ENCODE measurements at regions of chr19 and their contacts with region 1.

Region 1: DNA sequence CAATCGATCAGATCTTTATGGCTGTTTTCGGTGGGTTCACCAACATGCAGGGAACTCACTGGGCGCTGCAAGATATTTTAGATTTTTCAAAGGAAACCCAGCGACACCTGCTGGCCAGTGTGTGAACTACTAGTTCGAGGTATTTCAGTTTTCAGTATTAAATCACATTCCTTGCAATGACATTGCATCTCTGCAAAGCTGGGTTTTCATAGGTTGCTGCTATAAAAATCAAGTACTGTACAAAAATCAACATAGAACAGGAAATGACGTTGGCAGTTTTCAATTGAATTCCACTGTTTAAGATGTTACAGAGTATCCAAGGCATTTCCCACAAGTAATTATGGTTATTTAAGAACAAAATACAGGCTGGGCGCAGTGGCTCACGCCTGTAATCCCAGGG is 17.6 kb downstream of the LIG1 start:
- DNase-seq: peak; percentile 70
- CTCF ChIP-seq: peak; percentile 67

Region 2: GRCh38 chr19:48102870-48103751 is 49.4 kb before region 1 on chr19:
- in situ Hi-C with region 1: loop called (anchors 10 kb)
- DNase-seq: peak; percentile 69
- CTCF ChIP-seq: peak; percentile 67